Adrenal gland (tissue), 19 donors: ENCODE measurements at regions of chr9 and their contacts with region 1.

Region 1: DNA sequence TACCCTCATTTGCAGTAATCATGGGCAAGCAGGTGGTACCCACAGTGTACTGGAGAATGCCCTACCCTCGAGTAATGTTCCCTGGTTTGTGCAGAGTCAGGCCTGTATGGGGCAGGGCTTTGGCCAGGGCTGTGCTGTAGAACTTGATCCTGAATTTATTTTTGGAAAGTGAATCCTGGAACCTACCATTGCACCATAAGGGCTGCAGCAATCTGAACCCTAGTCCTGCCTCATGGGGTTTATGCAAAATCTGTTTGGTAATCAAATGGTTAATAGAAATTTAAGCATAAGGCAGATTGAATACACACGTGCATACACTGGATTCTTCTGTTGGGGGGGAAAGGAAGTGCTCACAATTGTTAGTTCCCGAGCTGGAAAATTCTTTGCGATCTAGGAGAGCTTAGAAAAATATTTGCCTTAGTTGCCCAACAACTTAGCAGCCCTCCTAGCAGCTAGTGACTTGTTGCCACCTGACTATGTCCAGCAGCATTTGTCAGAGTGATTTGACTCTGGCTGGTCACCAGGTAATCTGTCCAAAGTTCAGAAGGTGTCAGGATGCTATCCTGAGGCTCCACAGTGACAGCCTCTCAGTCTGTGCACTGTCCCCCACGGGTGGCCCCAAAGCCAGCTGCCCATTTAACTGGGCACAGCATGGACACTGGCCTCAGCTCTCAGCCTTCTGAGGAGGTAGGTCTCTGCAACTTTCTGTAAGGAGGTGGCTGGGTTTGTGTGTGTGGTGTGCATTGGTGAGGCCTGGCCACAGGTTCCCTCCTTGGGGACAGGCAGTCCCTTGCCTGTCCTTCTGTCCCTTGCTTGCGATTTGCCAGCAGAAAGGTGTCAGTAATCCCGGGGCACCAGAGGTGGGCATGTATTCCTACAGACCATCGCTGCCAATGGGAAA is 8.3 kb downstream of the MVB12B start:
- DNase-seq: no peak
- H3K4me3 ChIP-seq: no peak overlapping the region
- H3K27ac ChIP-seq: peak overlapping the region in 1 of 5 donors; percentile 4
- H3K4me1 ChIP-seq: peaks cover 0 to 42% of the 10 kb centered on the region in 2 donors
- H3K27me3 ChIP-seq: no peaks in the 10 kb centered on the region
- CTCF ChIP-seq: no peak
- POLR2A ChIP-seq: no peak

Region 2: GRCh38 chr9:126386088-126386487 is 51.1 kb after region 1 on chr9:
- intact Hi-C with region 1: loop called in 1 of 2 experiments (anchors 10 kb)
- DNase-seq: peak in 1 of 7 donors; percentile 53
- H3K4me3 ChIP-seq: no peak overlapping the region
- H3K27ac ChIP-seq: no peak overlapping the region
- H3K4me1 ChIP-seq: peaks cover 0 to 6% of the 10 kb centered on the region in 2 donors
- H3K27me3 ChIP-seq: no peaks in the 10 kb centered on the region
- CTCF ChIP-seq: peak in 1 of 6 experiments; percentile 7
- POLR2A ChIP-seq: no peak